ENCODE measurements at regions of chr3 and their contacts with region 1.

Region 1: GRCh38 chr3:114519415-114519814 is 225.6 kb downstream of the TIGIT start:
- DNase-seq: peak in 1 of 2 donors; percentile 37
- ATAC-seq: peak; percentile 53 to 90 (median 74)
- H3K4me3 ChIP-seq: no peak overlapping the region
- H3K27ac ChIP-seq: peak overlapping the region in 3 of 10 donors; percentile 14 to 44 (median 42)
- H3K4me1 ChIP-seq: peaks cover 5 to 36% (median 27%) of the 10 kb centered on the region in 9 donors
- H3K27me3 ChIP-seq: no peaks in the 10 kb centered on the region
- CTCF ChIP-seq: no peak

Region 2: DNA sequence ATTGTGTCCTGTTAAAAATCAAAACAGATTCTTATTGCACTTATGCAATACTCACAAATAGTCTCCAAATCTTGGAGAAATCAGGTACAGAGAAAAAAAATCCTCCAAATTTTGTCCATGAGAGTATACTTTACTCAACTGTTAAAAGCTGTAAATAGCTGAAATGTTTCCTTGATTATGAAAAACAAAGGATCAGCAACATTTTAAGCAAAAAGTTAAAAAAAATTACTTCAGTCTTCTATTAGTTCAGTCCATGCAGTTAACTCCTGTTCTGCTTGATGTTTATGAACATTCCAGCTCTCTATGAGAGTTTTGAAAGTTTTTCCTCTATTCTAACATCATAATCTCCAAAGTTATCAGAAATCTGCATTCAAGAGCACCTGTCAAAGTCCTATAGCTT is 259.3 kb before region 1 on chr3:
- intact Hi-C with region 1: no loop called
- DNase-seq: no peak
- ATAC-seq: no peak
- H3K4me3 ChIP-seq: no peak overlapping the region
- H3K27ac ChIP-seq: no peak overlapping the region
- H3K4me1 ChIP-seq: no peaks in the 10 kb centered on the region
- H3K27me3 ChIP-seq: no peaks in the 10 kb centered on the region
- CTCF ChIP-seq: no peak

Region 3: DNA sequence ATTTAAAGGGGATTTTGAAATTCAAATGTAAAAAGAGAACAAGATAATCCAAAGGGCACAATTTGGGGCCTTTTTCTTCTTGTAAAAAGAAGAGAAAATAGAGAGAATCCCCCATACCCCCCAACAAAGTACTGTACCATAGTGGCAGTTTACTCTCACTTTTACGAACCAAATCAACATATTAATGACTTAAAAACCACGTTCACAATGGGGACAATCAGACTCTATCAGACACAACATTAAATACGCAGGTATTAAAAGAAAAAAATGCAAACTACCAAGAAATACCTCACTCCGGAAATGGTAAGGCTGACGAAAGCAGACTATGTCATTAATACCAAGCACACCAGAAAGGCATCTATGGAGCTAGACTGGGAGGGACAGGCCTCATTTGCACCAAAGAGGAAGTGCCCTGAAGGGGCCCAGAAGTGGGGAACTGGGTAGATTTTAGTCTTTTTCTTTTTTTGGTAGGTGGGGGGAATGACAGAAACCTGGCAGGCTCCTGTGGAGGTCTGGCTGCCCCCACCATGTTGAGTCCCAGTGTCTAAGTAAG is 91.3 kb before region 1 on chr3:
- intact Hi-C with region 1: loop called in 1 of 10 experiments (anchors 10 kb)
- DNase-seq: no peak
- ATAC-seq: no peak
- H3K4me3 ChIP-seq: no peak overlapping the region
- H3K27ac ChIP-seq: no peak overlapping the region
- H3K4me1 ChIP-seq: peaks cover 0 to 20% (median 8%) of the 10 kb centered on the region in 9 donors
- H3K27me3 ChIP-seq: no peaks in the 10 kb centered on the region
- CTCF ChIP-seq: no peak

Region 4: GRCh38 chr3:114454551-114455251 is 64.7 kb before region 1 on chr3:
- intact Hi-C with region 1: loop called in 1 of 10 experiments (anchors 5 kb)
- DNase-seq: peak in 1 of 2 donors; percentile 21
- ATAC-seq: peak; percentile 30 to 66 (median 42)
- H3K4me3 ChIP-seq: peak overlapping the region in 9 of 10 donors; percentile 36 to 59 (median 56)
- H3K27ac ChIP-seq: peak overlapping the region; percentile 10 to 89 (median 61)
- H3K4me1 ChIP-seq: peaks cover 0 to 80% (median 59%) of the 10 kb centered on the region in 9 donors
- H3K27me3 ChIP-seq: no peaks in the 10 kb centered on the region
- CTCF ChIP-seq: no peak

Measured in heart right ventricle (tissue), 16 donors.